ENCODE measurements at regions of chr1 and their contacts with region 1.

Region 1: GRCh38 chr1:233240829-233241682 is 54.5 kb downstream of the PCNX2 start:
- DNase-seq: peak; percentile 56 to 72 (median 62)
- ATAC-seq: peak; percentile 83 to 94 (median 92)
- H3K4me3 ChIP-seq: peak overlapping the region in 7 of 12 donors; percentile 8 to 17 (median 11)
- H3K27ac ChIP-seq: no peak overlapping the region
- H3K4me1 ChIP-seq: peaks cover 0 to 25% (median 6%) of the 10 kb centered on the region in 12 donors
- H3K27me3 ChIP-seq: no peaks in the 10 kb centered on the region
- CTCF ChIP-seq: peak; percentile 67 to 91 (median 82)
- POLR2A ChIP-seq: no peak

Region 2: GRCh38 chr1:231724876-231725724 is 1516.0 kb before region 1 on chr1:
- intact Hi-C with region 1: loop called in 1 of 10 experiments (anchors 10 kb)
- DNase-seq: peak in 1 of 5 donors; percentile 34
- ATAC-seq: peak in 3 of 4 donors; percentile 56 to 76 (median 68)
- H3K4me3 ChIP-seq: no peak overlapping the region
- H3K27ac ChIP-seq: no peak overlapping the region
- H3K4me1 ChIP-seq: peaks cover 0 to 14% (median 0%) of the 10 kb centered on the region in 12 donors
- H3K27me3 ChIP-seq: no peaks in the 10 kb centered on the region
- CTCF ChIP-seq: peak in 9 of 12 donors; percentile 20 to 50 (median 26)
- POLR2A ChIP-seq: no peak

Region 3: GRCh38 chr1:231757101-231757404 is 1484.0 kb before region 1 on chr1:
- intact Hi-C with region 1: loop called in 3 of 10 experiments (anchors 5 to 10 kb)
- DNase-seq: no peak
- ATAC-seq: peak in 2 of 4 donors; percentile 18 to 34
- H3K4me3 ChIP-seq: no peak overlapping the region
- H3K27ac ChIP-seq: no peak overlapping the region
- H3K4me1 ChIP-seq: peaks cover 0 to 8% (median 0%) of the 10 kb centered on the region in 12 donors
- H3K27me3 ChIP-seq: no peaks in the 10 kb centered on the region
- CTCF ChIP-seq: peak in 1 of 12 donors; percentile 11
- POLR2A ChIP-seq: no peak

Region 4: GRCh38 chr1:232805269-232806185 is 435.5 kb before region 1 on chr1 and contains the start of gene MAP10:
- intact Hi-C with region 1: loop called in 1 of 10 experiments (anchors 5 kb)
- DNase-seq: peak; percentile 78 to 90 (median 88)
- ATAC-seq: peak; percentile 85 to 92 (median 86)
- H3K4me3 ChIP-seq: peak within 1 kb of the TSS; percentile 50 to 93 (median 74)
- H3K27ac ChIP-seq: peak within 1 kb of the TSS; percentile 86 to 96 (median 92)
- H3K4me1 ChIP-seq: peaks cover 2 to 62% (median 25%) of the 10 kb centered on the region in 12 donors
- H3K27me3 ChIP-seq: no peaks in the 10 kb centered on the region
- CTCF ChIP-seq: no peak
- POLR2A ChIP-seq: peak in 1 of 2 donors; percentile 44
- total RNA-seq, gene MAP10: 2.4 to 4.9 (median 3.6) TPM

Region 5: GRCh38 chr1:232950197-232951176 is 290.6 kb before region 1 on chr1 and contains the start of gene NTPCR:
- intact Hi-C with region 1: loop called in 1 of 10 experiments (anchors 10 kb)
- DNase-seq: peak; percentile 94 to 98 (median 95)
- ATAC-seq: peak; percentile 94 to 98 (median 96)
- H3K4me3 ChIP-seq: peak within 1 kb of the TSS; percentile 40 to 100 (median 88)
- H3K27ac ChIP-seq: peak within 1 kb of the TSS; percentile 70 to 95 (median 88)
- H3K4me1 ChIP-seq: peaks cover 0 to 32% (median 21%) of the 10 kb centered on the region in 12 donors
- H3K27me3 ChIP-seq: peaks cover 0 to 5% (median 0%) of the 10 kb centered on the region in 9 donors
- CTCF ChIP-seq: peak in 7 of 12 donors; percentile 5 to 42 (median 28)
- POLR2A ChIP-seq: peak in 1 of 2 donors; percentile 65
- total RNA-seq, gene NTPCR: 29.6 to 62.9 (median 57.7) TPM

Region 6: GRCh38 chr1:233015965-233016364 is 225.1 kb before region 1 on chr1:
- intact Hi-C with region 1: loop called in 3 of 10 experiments (anchors 10 kb)
- DNase-seq: no peak
- ATAC-seq: no peak
- H3K4me3 ChIP-seq: no peak overlapping the region
- H3K27ac ChIP-seq: no peak overlapping the region
- H3K4me1 ChIP-seq: peaks cover 0 to 16% (median 6%) of the 10 kb centered on the region in 12 donors
- H3K27me3 ChIP-seq: no peaks in the 10 kb centered on the region
- CTCF ChIP-seq: no peak
- POLR2A ChIP-seq: no peak

Region 7: GRCh38 chr1:233025157-233025915 is 215.7 kb before region 1 on chr1:
- intact Hi-C with region 1: loop called in 2 of 10 experiments (anchors 10 kb)
- DNase-seq: peak in 4 of 5 donors; percentile 40 to 61 (median 44)
- ATAC-seq: peak in 3 of 4 donors; percentile 59 to 70 (median 69)
- H3K4me3 ChIP-seq: no peak overlapping the region
- H3K27ac ChIP-seq: no peak overlapping the region
- H3K4me1 ChIP-seq: peaks cover 0 to 14% (median 3%) of the 10 kb centered on the region in 12 donors
- H3K27me3 ChIP-seq: no peaks in the 10 kb centered on the region
- CTCF ChIP-seq: peak; percentile 29 to 74 (median 56)
- POLR2A ChIP-seq: no peak

Measured in heart left ventricle (tissue), 16 donors.